T-cell (primary cell): ENCODE measurements at regions of chr20 and their contacts with region 1.

Region 1: GRCh38 chr20:2523919-2524708 is 12.3 kb upstream of the TMC2 start:
- DNase-seq: peak; percentile 75 to 95 (median 88)
- ATAC-seq: peak; percentile 83 to 87 (median 84)
- H3K4me3 ChIP-seq: peak overlapping the region; percentile 87 to 97
- H3K4me3 Mint-ChIP-seq: peak overlapping the region; percentile 87 to 92 (median 88)
- H3K27ac ChIP-seq: peak overlapping the region; percentile 48
- H3K27ac Mint-ChIP-seq: peak overlapping the region; percentile 44 to 82
- H3K4me1 ChIP-seq: peaks cover 0 to 15% of the 10 kb centered on the region in 2 experiments
- H3K4me1 Mint-ChIP-seq: peaks cover 11 to 19% (median 16%) of the 10 kb centered on the region in 3 donors
- H3K27me3 ChIP-seq: peaks cover 0 to 10% of the 10 kb centered on the region in 2 experiments
- H3K27me3 Mint-ChIP-seq: peaks cover 2 to 4% of the 10 kb centered on the region in 2 donors

Region 2: DNA sequence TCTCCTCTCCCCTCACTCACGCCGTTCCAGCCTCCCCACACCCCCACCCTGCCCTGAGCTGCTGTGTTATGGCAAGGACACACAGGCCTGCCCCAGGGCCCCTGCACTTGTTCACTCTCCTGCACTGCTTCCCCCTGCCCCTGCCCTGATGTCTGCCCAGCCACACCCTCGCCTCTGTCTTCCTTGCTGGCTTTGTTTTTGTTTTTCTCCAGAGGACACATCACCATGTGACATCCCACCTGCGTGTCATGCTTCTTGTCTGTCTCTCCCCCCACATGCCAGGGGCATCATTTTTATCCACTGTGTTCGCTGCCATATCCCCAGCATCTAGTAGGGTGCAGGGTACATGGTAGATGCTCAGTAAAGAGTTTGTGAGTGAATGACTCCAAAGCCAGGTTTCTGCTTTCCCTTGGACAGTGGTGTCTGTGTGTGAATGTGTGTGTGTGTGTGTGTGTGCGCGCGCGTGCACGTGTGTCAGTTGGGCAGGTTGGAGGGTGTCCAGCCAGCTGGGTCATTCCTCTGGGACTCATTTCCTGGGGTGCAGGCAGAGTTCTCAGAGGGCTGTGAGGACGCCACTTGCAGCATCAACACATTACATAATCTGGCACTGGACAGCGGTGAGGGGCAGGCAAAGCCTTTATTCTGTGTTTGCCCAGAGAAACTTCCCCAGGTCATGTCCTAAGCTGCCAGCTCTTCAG is 361.8 kb before region 1 on chr20:
- CTCF ChIA-PET with region 1: no interaction called
- POLR2A ChIA-PET with region 1: no interaction called
- DNase-seq: no peak
- ATAC-seq: no peak
- H3K4me3 ChIP-seq: no peak overlapping the region
- H3K4me3 Mint-ChIP-seq: no peak overlapping the region
- H3K27ac ChIP-seq: no peak overlapping the region
- H3K27ac Mint-ChIP-seq: peak overlapping the region in 1 of 2 donors; percentile 37
- H3K4me1 ChIP-seq: no peaks in the 10 kb centered on the region
- H3K4me1 Mint-ChIP-seq: no peaks in the 10 kb centered on the region
- H3K27me3 ChIP-seq: no peaks in the 10 kb centered on the region
- H3K27me3 Mint-ChIP-seq: no peaks in the 10 kb centered on the region

Region 3: GRCh38 chr20:2470423-2471193 is 53.5 kb before region 1 on chr20 and contains the start of gene SNRPB:
- CTCF ChIA-PET with region 1: interaction called, 4 to 14 read pairs
- POLR2A ChIA-PET with region 1: no interaction called
- DNase-seq: peak; percentile 92 to 99 (median 96)
- ATAC-seq: peak; percentile 91 to 94 (median 92)
- H3K4me3 ChIP-seq: peak within 1 kb of the TSS; percentile 94 to 99
- H3K4me3 Mint-ChIP-seq: peak within 1 kb of the TSS; percentile 95 to 100 (median 97)
- H3K27ac ChIP-seq: peak within 1 kb of the TSS; percentile 98
- H3K27ac Mint-ChIP-seq: peak within 1 kb of the TSS; percentile 98 to 99
- H3K4me1 ChIP-seq: peaks cover 8 to 20% of the 10 kb centered on the region in 2 experiments
- H3K4me1 Mint-ChIP-seq: peaks cover 44 to 46% (median 45%) of the 10 kb centered on the region in 3 donors
- H3K27me3 ChIP-seq: no peaks in the 10 kb centered on the region
- H3K27me3 Mint-ChIP-seq: no peaks in the 10 kb centered on the region
- total RNA-seq, gene SNRPB: 120 to 139 (median 128) TPM

Region 4: DNA sequence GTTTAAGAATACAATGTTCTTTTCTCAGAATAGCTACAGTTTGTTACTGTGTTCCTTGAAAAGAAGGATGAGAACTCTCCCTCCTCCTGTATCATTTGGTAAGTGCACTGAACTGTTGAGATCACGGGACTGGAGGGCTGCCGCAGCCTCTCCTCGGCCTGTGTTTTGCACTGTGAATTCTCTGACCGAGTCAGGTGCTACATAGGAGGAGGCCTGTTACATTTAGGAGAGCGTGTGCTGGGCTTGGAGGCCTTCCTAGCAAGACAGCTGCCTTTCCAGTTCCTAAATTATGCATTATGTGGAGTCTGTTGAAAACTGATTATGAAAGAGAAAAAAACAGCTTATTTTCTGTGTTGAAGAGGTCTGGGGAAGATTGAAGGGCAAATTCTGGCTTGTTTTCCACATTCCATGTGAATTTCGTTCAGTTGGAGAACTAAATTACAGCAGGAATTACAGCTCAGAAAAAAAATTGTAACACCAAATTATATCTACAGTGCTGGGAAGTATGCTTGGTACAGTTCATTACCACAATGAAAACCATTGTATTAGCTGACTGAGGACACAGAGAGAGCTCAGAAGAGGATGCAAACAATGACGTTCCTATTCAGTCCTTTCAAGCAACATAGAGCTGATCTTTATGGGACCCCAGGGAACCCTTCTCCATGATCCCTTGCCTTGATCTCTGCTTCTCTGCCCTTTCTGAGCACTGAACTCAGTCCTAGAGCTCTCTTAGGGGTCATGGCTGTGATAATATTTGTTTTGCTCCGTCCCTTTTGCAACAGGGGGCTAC is 15.0 kb after region 1 on chr20:
- CTCF ChIA-PET with region 1: interaction called, 3 to 11 read pairs
- POLR2A ChIA-PET with region 1: no interaction called
- DNase-seq: no peak
- ATAC-seq: no peak
- H3K4me3 ChIP-seq: no peak overlapping the region
- H3K4me3 Mint-ChIP-seq: no peak overlapping the region
- H3K27ac ChIP-seq: no peak overlapping the region
- H3K27ac Mint-ChIP-seq: no peak overlapping the region
- H3K4me1 ChIP-seq: no peaks in the 10 kb centered on the region
- H3K4me1 Mint-ChIP-seq: no peaks in the 10 kb centered on the region
- H3K27me3 ChIP-seq: peaks cover 12 to 46% of the 10 kb centered on the region in 2 experiments
- H3K27me3 Mint-ChIP-seq: peaks cover 35 to 37% of the 10 kb centered on the region in 2 donors